CD8-positive, alpha-beta T cell (primary cell): ENCODE measurements at regions of chr6 and their contacts with region 1.

Region 1: DNA sequence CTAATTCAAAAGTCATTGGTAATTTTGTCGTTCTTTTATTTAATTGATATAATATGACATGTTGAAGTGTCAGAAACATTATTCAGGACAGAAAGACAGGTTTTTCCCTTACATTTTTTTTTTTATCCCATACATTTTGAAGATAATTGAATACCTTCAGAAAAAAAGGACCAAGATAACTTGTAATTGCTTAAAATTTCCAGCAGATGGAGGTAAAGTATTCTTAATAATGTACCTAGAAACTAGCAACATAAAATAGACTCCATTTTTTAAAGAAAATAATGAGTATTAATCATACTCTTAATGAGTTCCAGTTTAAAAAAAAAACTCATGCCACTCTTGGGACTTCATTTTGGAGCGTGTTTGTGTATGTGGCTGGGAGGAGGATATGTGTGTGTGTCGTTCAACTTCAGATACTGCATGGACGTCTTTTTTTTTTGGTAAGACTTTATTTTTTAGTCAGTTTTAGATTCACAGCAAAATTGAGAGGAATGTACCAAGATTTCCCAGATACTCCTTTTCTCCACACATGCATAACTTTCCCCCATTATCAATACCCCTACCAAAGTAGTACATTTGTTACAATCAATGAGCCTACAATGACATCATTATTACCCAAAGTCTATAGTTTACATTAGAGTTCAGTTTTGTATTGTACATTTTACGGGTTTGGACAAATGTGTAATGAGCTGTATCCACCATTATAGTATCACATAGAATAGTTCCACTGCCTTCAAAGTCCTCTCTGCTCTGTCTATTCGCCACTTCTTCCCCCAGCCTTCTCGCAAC is 79.4 kb downstream of the ROS1 start:
- DNase-seq: peak in 2 of 9 experiments; percentile 14 to 36
- ATAC-seq: no peak
- H3K4me3 ChIP-seq: no peak overlapping the region
- H3K4me3 Mint-ChIP-seq: no peak overlapping the region
- H3K27ac ChIP-seq: no peak overlapping the region
- H3K27ac Mint-ChIP-seq: no peak overlapping the region
- H3K4me1 ChIP-seq: no peaks in the 10 kb centered on the region
- H3K4me1 Mint-ChIP-seq: no peaks in the 10 kb centered on the region
- H3K27me3 ChIP-seq: no peaks in the 10 kb centered on the region
- H3K27me3 Mint-ChIP-seq: peaks cover 11% of the 10 kb centered on the region
- CTCF ChIP-seq: peak; percentile 72

Region 2: GRCh38 chr6:117555882-117556498 is 209.7 kb after region 1 on chr6:
- CTCF ChIA-PET with region 1: interaction called, 3 read pairs
- POLR2A ChIA-PET with region 1: no interaction called
- intact Hi-C with region 1: loop called (anchors 1 to 5 kb)
- DNase-seq: peak in 8 of 9 experiments; percentile 26 to 78 (median 65)
- ATAC-seq: peak; percentile 55
- H3K4me3 ChIP-seq: no peak overlapping the region
- H3K4me3 Mint-ChIP-seq: no peak overlapping the region
- H3K27ac ChIP-seq: no peak overlapping the region
- H3K27ac Mint-ChIP-seq: no peak overlapping the region
- H3K4me1 ChIP-seq: peaks cover under 1% of the 10 kb centered on the region
- H3K4me1 Mint-ChIP-seq: peaks cover 8% of the 10 kb centered on the region
- H3K27me3 ChIP-seq: no peaks in the 10 kb centered on the region
- H3K27me3 Mint-ChIP-seq: no peaks in the 10 kb centered on the region
- CTCF ChIP-seq: peak; percentile 97

Region 3: DNA sequence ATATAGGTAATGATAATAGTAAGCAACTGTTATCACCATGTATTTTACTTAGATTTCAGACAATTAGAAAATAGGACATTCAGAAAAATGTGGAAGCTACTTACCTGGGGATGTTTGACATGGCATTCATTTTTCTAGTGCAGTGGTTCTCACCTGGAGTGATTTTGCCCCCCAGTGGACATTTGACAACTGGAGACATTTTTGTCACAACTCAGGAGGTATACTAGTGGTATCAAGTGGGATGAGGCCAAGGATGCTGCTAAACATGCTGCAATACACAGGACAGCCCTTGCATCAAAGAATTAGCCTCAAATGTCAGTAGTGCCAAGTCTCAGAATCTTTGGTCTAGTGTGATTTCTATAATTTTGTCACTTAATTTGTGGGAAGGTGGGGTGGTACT is 365.0 kb after region 1 on chr6:
- CTCF ChIA-PET with region 1: no interaction called
- POLR2A ChIA-PET with region 1: no interaction called
- intact Hi-C with region 1: loop called in 1 of 2 experiments (anchors 5 kb)
- DNase-seq: peak in 2 of 9 experiments; percentile 24 to 35
- ATAC-seq: no peak
- H3K4me3 ChIP-seq: no peak overlapping the region
- H3K4me3 Mint-ChIP-seq: no peak overlapping the region
- H3K27ac ChIP-seq: no peak overlapping the region
- H3K27ac Mint-ChIP-seq: no peak overlapping the region
- H3K4me1 ChIP-seq: no peaks in the 10 kb centered on the region
- H3K4me1 Mint-ChIP-seq: peaks cover 2% of the 10 kb centered on the region
- H3K27me3 ChIP-seq: no peaks in the 10 kb centered on the region
- H3K27me3 Mint-ChIP-seq: no peaks in the 10 kb centered on the region
- CTCF ChIP-seq: no peak

Region 4: GRCh38 chr6:118574051-118574865 is 1227.9 kb after region 1 on chr6:
- CTCF ChIA-PET with region 1: no interaction called
- POLR2A ChIA-PET with region 1: no interaction called
- intact Hi-C with region 1: loop called in 1 of 2 experiments (anchors 10 kb)
- DNase-seq: no peak
- ATAC-seq: no peak
- H3K4me3 ChIP-seq: no peak overlapping the region
- H3K4me3 Mint-ChIP-seq: no peak overlapping the region
- H3K27ac ChIP-seq: peak overlapping the region in 1 of 2 experiments; percentile 28
- H3K27ac Mint-ChIP-seq: peak overlapping the region; percentile 47
- H3K4me1 ChIP-seq: no peaks in the 10 kb centered on the region
- H3K4me1 Mint-ChIP-seq: peaks cover 16% of the 10 kb centered on the region
- H3K27me3 ChIP-seq: no peaks in the 10 kb centered on the region
- H3K27me3 Mint-ChIP-seq: no peaks in the 10 kb centered on the region
- CTCF ChIP-seq: no peak